IMR-90 (cell line): ENCODE measurements at regions of chr11 and their contacts with region 1.

Region 1: DNA sequence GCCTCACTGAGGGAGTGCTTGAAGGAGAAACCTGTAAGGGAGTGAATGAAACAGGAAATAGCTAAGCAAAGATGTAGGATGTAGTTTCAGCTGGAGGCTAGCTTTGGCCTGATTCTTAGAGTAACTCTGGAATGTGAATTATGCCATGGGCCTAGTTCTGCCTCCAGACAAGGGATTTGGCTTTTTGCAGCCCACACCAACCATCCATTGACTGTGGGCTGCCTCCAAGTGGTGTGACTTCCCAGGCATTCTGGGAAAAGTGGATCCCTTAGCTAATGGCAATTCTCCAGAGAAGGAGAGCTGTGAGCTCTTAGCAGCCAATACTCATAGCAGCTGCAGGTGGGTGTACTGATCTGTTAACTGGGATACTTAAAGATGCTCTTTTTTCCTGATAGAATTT is 2.0 kb upstream of the OR9I1 start:
- DNase-seq: peak; percentile 1
- ATAC-seq: peak; percentile 37
- H3K4me3 ChIP-seq: no peak overlapping the region
- H3K27ac ChIP-seq: no peak overlapping the region
- H3K4me1 ChIP-seq: peaks cover 2% of the 10 kb centered on the region
- H3K27me3 ChIP-seq: no peaks in the 10 kb centered on the region
- CTCF ChIP-seq: no peak
- POLR2A ChIP-seq: no peak
- RAD21 ChIP-seq: no peak

Region 2: DNA sequence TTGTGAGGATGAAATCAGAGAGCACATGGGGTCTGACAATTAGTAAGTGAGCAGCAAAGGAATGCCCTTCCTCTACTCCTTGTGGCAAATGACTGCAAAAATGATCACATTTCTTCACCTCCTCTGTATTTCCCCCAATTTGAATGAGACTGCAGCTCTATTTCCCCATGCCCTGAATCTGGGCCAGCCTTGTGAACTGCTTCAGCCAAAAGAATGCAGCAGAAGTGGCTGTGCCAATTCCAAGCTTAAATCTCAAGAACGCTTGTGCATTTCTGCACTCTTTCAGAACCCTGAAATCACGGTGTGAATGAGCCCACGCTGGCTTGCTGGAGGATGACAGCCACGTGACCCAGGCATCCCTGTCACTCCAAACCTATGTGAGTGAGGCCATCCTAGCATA is 710.3 kb before region 1 on chr11:
- CTCF ChIA-PET with region 1: no interaction called
- POLR2A ChIA-PET with region 1: no interaction called
- dilution Hi-C with region 1: no loop called
- in situ Hi-C with region 1: no loop called
- intact Hi-C with region 1: no loop called
- DNase-seq: peak; percentile 48
- ATAC-seq: peak; percentile 51
- H3K4me3 ChIP-seq: no peak overlapping the region
- H3K27ac ChIP-seq: no peak overlapping the region
- H3K4me1 ChIP-seq: no peaks in the 10 kb centered on the region
- H3K27me3 ChIP-seq: no peaks in the 10 kb centered on the region
- CTCF ChIP-seq: no peak
- POLR2A ChIP-seq: no peak
- RAD21 ChIP-seq: no peak

Region 3: GRCh38 chr11:57700425-57700824 is 426.9 kb before region 1 on chr11:
- CTCF ChIA-PET with region 1: no interaction called
- POLR2A ChIA-PET with region 1: interaction called, 15 read pairs
- dilution Hi-C with region 1: no loop called
- in situ Hi-C with region 1: no loop called
- intact Hi-C with region 1: no loop called
- DNase-seq: no peak
- ATAC-seq: no peak
- H3K4me3 ChIP-seq: no peak overlapping the region
- H3K27ac ChIP-seq: no peak overlapping the region
- H3K4me1 ChIP-seq: no peaks in the 10 kb centered on the region
- H3K27me3 ChIP-seq: no peaks in the 10 kb centered on the region
- CTCF ChIP-seq: no peak
- POLR2A ChIP-seq: no peak
- RAD21 ChIP-seq: no peak

Region 4: GRCh38 chr11:58006940-58007339 is 120.4 kb before region 1 on chr11:
- CTCF ChIA-PET with region 1: no interaction called
- POLR2A ChIA-PET with region 1: no interaction called
- dilution Hi-C with region 1: no loop called
- in situ Hi-C with region 1: no loop called
- intact Hi-C with region 1: no loop called
- DNase-seq: peak; percentile 78
- ATAC-seq: peak; percentile 69
- H3K4me3 ChIP-seq: no peak overlapping the region
- H3K27ac ChIP-seq: peak overlapping the region; percentile 47; the same call in 1 of the 2 replicates
- H3K4me1 ChIP-seq: peaks cover 2% of the 10 kb centered on the region; the same call in 1 of the 2 replicates
- H3K27me3 ChIP-seq: no peaks in the 10 kb centered on the region
- CTCF ChIP-seq: no peak
- POLR2A ChIP-seq: no peak
- RAD21 ChIP-seq: no peak